ENCODE measurements at regions of chr5 and their contacts with region 1.

Region 1: DNA sequence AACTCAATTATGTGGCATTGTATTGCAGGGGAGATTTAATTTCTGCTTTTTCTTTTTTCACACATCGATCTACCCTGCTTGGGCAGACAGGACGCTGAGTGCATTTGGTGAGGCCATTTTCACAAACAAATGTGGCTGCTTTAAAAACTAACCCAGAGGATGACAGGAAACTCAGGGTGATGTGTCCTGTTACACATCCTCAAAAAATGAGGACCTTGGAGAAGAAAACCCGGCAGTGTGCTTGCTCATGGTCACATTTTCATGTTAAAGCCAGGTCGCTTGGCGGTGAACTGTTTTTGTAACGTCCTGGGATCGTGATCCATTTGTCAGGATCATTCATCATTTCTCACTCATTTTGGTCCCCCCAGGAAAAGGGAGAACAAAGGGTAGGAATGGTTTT is 478.3 kb upstream of the ADAMTS16 start:
- DNase-seq: no peak
- H3K4me3 ChIP-seq: no peak overlapping the region
- H3K27ac ChIP-seq: no peak overlapping the region
- H3K4me1 ChIP-seq: no peaks in the 10 kb centered on the region
- H3K27me3 ChIP-seq: no peaks in the 10 kb centered on the region
- CTCF ChIP-seq: no peak

Region 2: GRCh38 chr5:4730279-4730678 is 68.4 kb after region 1 on chr5:
- CTCF ChIA-PET with region 1: no interaction called
- dilution Hi-C with region 1: loop called (anchors 5 kb)
- in situ Hi-C with region 1: no loop called
- intact Hi-C with region 1: no loop called
- DNase-seq: no peak
- H3K4me3 ChIP-seq: no peak overlapping the region
- H3K27ac ChIP-seq: no peak overlapping the region
- H3K4me1 ChIP-seq: no peaks in the 10 kb centered on the region
- H3K27me3 ChIP-seq: no peaks in the 10 kb centered on the region
- CTCF ChIP-seq: no peak